Upper lobe of right lung (tissue), 1 donor: ENCODE measurements at regions of chr17 and their contacts with region 1.

Region 1: GRCh38 chr17:28902819-28903545 is at the start of gene DHRS13:
- DNase-seq: peak; percentile 96
- ATAC-seq: peak; percentile 97
- H3K4me3 ChIP-seq: peak within 1 kb of the TSS; percentile 73
- H3K27ac ChIP-seq: peak within 1 kb of the TSS; percentile 76
- H3K4me1 ChIP-seq: peaks cover 26% of the 10 kb centered on the region
- H3K27me3 ChIP-seq: no peaks in the 10 kb centered on the region
- CTCF ChIP-seq: peak; percentile 90
- total RNA-seq, gene DHRS13: 12.8 TPM

Region 2: DNA sequence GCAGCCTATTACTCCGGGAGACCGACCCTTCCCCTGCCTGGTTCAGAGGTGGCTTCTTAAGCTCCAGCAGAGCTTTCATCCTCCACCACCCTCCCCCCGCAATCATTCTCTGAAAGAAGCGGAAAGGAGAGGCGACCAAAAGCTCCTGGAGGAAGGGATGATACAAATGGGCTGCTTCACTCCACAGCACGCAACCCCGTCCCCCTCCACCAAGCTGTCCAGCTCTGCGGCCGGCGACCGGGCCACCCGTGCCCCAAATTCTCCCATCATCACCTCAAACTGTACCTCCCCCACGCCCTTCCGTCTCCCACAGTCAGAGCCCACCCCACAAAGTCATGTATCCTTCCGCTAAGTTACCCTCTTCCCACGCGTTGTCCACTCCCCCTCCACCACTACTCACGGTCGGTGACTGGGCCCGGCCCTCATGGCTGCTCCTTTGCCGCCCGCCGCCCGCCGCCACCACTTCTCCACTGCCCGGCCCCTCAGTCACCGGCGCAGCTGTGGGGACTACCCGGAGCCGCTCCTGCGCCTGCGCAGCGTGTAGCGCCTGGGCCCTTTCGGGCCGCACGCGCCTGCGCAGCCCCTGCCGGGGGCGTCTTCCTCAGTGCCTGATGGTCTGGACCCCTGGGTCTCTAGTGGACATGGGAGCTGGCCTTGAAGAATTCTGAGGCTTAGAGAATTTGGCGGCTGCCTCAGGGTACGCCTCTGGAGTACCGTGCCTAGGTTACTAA is 60.5 kb before region 1 on chr17 and contains the start of gene FAM222B:
- intact Hi-C with region 1: loop called (anchors 10 kb)
- DNase-seq: peak; percentile 94
- ATAC-seq: peak; percentile 100
- H3K4me3 ChIP-seq: peak within 1 kb of the TSS; percentile 84
- H3K27ac ChIP-seq: peak within 1 kb of the TSS; percentile 86
- H3K4me1 ChIP-seq: peaks cover 5% of the 10 kb centered on the region
- H3K27me3 ChIP-seq: no peaks in the 10 kb centered on the region
- CTCF ChIP-seq: no peak
- total RNA-seq, gene FAM222B: 22.2 TPM

Region 3: GRCh38 chr17:29089601-29090044 is 186.6 kb after region 1 on chr17:
- intact Hi-C with region 1: no loop called
- DNase-seq: no peak
- ATAC-seq: no peak
- H3K4me3 ChIP-seq: no peak overlapping the region
- H3K27ac ChIP-seq: no peak overlapping the region
- H3K4me1 ChIP-seq: no peaks in the 10 kb centered on the region
- H3K27me3 ChIP-seq: no peaks in the 10 kb centered on the region
- CTCF ChIP-seq: no peak